ENCODE measurements at regions of chr19 and their contacts with region 1.

Region 1: GRCh38 chr19:6516659-6517291 is 14.1 kb upstream of the TNFSF9 start:
- DNase-seq: peak; percentile 86
- H3K4me3 Mint-ChIP-seq: peak overlapping the region; percentile 96
- H3K27ac Mint-ChIP-seq: peak overlapping the region; percentile 93
- H3K4me1 Mint-ChIP-seq: peaks cover 34% of the 10 kb centered on the region
- H3K27me3 Mint-ChIP-seq: peaks cover 2% of the 10 kb centered on the region

Region 2: GRCh38 chr19:6481541-6482342 is 35.0 kb before region 1 on chr19 and contains the start of gene DENND1C:
- intact Hi-C with region 1: loop called (anchors 2 kb)
- DNase-seq: peak; percentile 61
- H3K4me3 Mint-ChIP-seq: peak within 1 kb of the TSS; percentile 91
- H3K27ac Mint-ChIP-seq: peak within 1 kb of the TSS; percentile 89
- H3K4me1 Mint-ChIP-seq: peaks cover 23% of the 10 kb centered on the region
- H3K27me3 Mint-ChIP-seq: no peaks in the 10 kb centered on the region
- total RNA-seq, gene DENND1C: 68.4 and 75.6 TPM in 2 replicates

Region 3: GRCh38 chr19:6530386-6531161 is 13.8 kb after region 1 on chr19 and contains the start of gene TNFSF9:
- intact Hi-C with region 1: loop called (anchors 1 kb)
- DNase-seq: peak; percentile 77
- H3K4me3 Mint-ChIP-seq: peak within 1 kb of the TSS; percentile 90
- H3K27ac Mint-ChIP-seq: peak within 1 kb of the TSS; percentile 83
- H3K4me1 Mint-ChIP-seq: peaks cover 39% of the 10 kb centered on the region
- H3K27me3 Mint-ChIP-seq: peaks cover 32% of the 10 kb centered on the region
- total RNA-seq, gene TNFSF9: 8.0 and 9.7 TPM in 2 replicates

Region 4: DNA sequence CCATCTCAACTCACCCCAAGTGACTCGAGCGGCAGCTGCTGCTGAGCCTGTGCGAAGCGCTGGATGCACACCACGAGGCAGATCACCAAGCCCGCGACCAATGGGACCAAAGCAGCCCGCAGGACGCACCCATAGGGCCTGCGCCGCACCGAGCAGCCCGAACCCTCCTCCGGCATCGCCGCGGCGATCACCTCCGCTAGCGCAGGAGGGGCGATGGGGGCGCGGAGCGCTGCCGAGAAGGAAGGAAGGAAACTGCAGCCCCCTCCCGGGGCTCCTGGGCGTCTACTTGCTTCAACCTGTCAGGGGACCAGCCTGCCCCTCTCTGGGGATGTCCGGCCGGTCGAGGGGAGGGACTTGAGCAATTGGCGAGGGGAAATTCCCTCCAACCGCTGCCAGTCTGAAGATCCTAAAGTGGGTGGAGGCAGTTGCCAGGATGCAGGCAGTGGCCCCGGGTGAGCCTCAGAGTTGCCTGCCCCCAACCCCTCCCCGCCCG is 74.1 kb after region 1 on chr19 and contains the start of gene CD70:
- intact Hi-C with region 1: loop called (anchors 1 kb)
- DNase-seq: peak; percentile 70
- H3K4me3 Mint-ChIP-seq: peak within 1 kb of the TSS; percentile 95
- H3K27ac Mint-ChIP-seq: peak within 1 kb of the TSS; percentile 87
- H3K4me1 Mint-ChIP-seq: peaks cover 66% of the 10 kb centered on the region
- H3K27me3 Mint-ChIP-seq: peaks cover 33% of the 10 kb centered on the region
- total RNA-seq, gene CD70: 55.4 and 61.6 TPM in 2 replicates

Region 5: GRCh38 chr19:6632002-6632621 is 115.3 kb after region 1 on chr19:
- intact Hi-C with region 1: loop called (anchors 1 kb)
- DNase-seq: peak; percentile 76
- H3K4me3 Mint-ChIP-seq: no peak overlapping the region
- H3K27ac Mint-ChIP-seq: no peak overlapping the region
- H3K4me1 Mint-ChIP-seq: peaks cover 29% of the 10 kb centered on the region
- H3K27me3 Mint-ChIP-seq: peaks cover 4% of the 10 kb centered on the region

Region 6: DNA sequence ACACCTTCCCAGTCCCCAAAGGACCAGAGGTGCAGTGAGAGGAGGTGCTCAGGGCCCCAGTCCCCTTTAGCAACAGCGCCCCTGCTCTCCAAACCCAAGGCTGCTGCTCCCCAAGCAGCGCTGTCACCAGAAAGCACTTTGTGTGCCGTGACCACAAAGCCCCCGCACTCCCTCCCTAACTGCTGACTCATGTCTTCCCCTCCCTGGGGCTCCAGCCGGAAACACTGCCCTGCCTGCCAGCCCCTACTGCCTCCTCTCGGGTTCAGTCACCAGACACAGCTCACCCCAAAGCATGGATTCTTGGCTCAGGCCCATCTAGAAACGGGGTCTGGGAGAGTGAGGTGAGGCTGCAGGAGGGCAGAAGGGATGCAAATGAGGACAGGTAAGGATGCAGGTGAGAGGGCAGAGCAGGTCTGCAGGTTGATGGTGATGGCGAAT is 158.1 kb after region 1 on chr19:
- intact Hi-C with region 1: loop called (anchors 1 kb)
- DNase-seq: peak; percentile 84
- H3K4me3 Mint-ChIP-seq: peak overlapping the region; percentile 70
- H3K27ac Mint-ChIP-seq: peak overlapping the region; percentile 94
- H3K4me1 Mint-ChIP-seq: peaks cover 79% of the 10 kb centered on the region
- H3K27me3 Mint-ChIP-seq: peaks cover 4% of the 10 kb centered on the region

Region 7: DNA sequence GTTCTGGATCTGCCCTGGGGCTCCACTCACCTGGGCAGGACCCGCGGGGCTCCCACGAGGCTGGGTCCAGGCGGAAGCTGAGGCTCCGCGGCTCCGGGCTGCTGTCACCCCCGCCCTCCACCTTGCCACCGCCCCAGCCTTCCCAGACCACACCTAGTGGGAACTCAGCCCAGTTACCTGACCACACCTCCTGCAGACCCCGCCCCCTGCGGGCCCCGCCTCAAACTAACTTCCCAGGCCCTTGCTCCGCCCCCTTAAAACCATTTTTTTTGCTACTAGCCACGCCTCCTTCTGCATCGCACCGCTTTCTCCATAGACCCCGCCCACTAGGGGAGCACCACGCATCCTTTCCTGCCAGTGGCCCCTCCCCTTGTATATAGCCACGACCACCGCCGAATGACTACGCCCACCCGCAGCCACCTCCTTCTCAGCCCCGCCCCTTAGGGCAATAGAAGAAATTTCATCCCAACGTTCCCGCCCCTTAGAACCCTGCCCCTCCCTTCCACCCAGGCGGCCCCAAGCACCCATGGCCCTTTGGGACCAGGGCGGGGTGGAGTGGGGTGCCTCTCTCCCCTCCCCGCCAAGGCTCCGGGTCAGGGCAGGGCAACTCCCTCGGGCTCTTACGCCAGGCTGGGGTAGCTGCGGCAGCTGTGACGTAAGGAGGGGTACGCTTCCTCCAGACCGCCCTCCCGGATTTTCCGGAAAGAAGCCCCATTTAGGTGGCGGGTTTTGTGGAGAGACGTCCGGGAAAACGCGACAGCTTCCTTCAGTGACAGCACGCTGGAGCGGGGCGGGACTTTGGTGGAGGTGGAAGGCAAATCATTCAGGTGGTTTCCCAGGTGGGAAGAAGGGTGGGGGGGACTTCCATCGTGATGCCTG is 250.8 kb after region 1 on chr19 and contains the start of gene SH2D3A:
- intact Hi-C with region 1: loop called (anchors 1 kb)
- DNase-seq: peak; percentile 93
- H3K4me3 Mint-ChIP-seq: peak within 1 kb of the TSS; percentile 88
- H3K27ac Mint-ChIP-seq: peak within 1 kb of the TSS; percentile 89
- H3K4me1 Mint-ChIP-seq: peaks cover 53% of the 10 kb centered on the region
- H3K27me3 Mint-ChIP-seq: no peaks in the 10 kb centered on the region
- total RNA-seq, gene SH2D3A: 15.0 and 15.6 TPM in 2 replicates

Measured in activated T-helper 1 cell treated with anti-CD3 and anti-CD28 coated beads, Interleukin-12 subunit alpha, Interleukin-12 subunit beta, Interleukin-2, Interleukin-4 antibody, amounts not matched to agents 30 ng/mL and 10 ng/mL and 1 ng/mL, durations not matched to agents 14 hours and 24 hours and 36 hours (primary cell).